Activated naive CD4-positive, alpha-beta T cell treated with anti-CD3 and anti-CD28 coated beads for 36 hours (primary cell): ENCODE measurements at regions of chr6 and their contacts with region 1.

Region 1: DNA sequence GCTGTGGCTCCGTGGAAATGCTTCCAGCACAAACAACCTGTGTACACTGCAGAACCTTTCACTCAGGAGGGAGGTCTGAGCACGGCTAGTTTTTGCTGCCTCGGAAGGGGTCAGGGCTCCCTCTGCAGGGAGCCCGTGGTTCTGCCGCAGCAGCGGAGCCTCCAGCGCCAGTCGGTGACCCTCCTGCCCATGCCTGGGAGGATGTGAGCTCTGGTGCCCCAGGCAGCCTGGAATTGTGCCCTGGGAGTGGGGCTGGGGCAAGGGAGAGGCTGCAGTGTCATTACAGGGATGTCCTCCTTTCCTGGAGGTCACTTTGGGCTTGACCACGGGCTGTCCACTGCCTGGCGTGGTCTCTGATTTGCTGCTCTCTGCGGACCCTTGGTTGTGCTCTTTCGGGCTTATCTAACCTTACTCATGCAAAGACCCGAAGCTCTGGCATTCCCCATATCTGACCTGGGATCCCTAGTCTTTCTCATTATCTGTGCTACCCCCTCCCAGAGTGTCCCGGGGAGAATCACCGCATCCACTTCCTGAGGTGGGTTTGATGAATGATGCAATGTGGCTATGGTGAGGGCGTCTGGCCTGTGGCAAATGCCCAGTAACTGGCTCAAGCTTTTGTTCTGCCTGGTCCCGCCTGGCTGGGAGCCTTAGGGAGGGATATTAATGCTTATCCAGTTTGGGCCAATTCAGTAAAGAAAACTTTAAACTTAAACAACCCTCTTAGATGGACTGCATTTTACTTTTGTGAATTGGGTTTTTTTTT is 59.6 kb upstream of the TAGAP start:
- DNase-seq: peak; percentile 86
- H3K4me3 Mint-ChIP-seq: no peak overlapping the region
- H3K27ac Mint-ChIP-seq: peak overlapping the region; percentile 86
- H3K4me1 Mint-ChIP-seq: peaks cover 81% of the 10 kb centered on the region
- H3K27me3 Mint-ChIP-seq: no peaks in the 10 kb centered on the region

Region 2: GRCh38 chr6:158559895-158560835 is 544.2 kb before region 1 on chr6 and contains the start of gene TMEM181:
- CTCF ChIA-PET with region 1: no interaction called
- intact Hi-C with region 1: no loop called
- DNase-seq: peak; percentile 90
- H3K4me3 Mint-ChIP-seq: peak within 1 kb of the TSS; percentile 93
- H3K27ac Mint-ChIP-seq: peak within 1 kb of the TSS; percentile 84
- H3K4me1 Mint-ChIP-seq: peaks cover 35% of the 10 kb centered on the region
- H3K27me3 Mint-ChIP-seq: no peaks in the 10 kb centered on the region
- total RNA-seq, gene TMEM181: 8.3 to 8.6 TPM

Region 3: DNA sequence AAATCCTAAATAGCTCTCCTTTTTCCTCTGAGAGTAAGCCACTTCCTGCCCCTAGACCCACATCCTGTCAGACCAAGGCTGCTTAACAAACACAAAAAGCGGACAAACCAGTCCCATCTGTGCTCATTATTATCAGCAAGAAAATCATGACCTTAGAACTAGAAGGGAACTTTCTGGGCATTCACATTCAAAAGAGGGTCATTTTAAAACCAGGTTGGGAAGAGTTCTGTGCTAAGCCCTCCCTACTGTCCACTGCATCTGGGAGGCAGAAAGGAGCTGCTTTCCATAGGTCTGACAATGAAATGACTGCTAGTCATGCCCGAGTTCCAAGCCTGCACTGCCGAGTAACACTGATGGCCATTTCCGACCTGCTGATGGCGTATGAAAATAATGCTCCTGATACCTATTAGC is 300.6 kb before region 1 on chr6:
- CTCF ChIA-PET with region 1: no interaction called
- intact Hi-C with region 1: loop called (anchors 5 kb)
- DNase-seq: peak; percentile 52
- H3K4me3 Mint-ChIP-seq: peak overlapping the region; percentile 3
- H3K27ac Mint-ChIP-seq: peak overlapping the region; percentile 25
- H3K4me1 Mint-ChIP-seq: peaks cover 90% of the 10 kb centered on the region
- H3K27me3 Mint-ChIP-seq: no peaks in the 10 kb centered on the region

Region 4: DNA sequence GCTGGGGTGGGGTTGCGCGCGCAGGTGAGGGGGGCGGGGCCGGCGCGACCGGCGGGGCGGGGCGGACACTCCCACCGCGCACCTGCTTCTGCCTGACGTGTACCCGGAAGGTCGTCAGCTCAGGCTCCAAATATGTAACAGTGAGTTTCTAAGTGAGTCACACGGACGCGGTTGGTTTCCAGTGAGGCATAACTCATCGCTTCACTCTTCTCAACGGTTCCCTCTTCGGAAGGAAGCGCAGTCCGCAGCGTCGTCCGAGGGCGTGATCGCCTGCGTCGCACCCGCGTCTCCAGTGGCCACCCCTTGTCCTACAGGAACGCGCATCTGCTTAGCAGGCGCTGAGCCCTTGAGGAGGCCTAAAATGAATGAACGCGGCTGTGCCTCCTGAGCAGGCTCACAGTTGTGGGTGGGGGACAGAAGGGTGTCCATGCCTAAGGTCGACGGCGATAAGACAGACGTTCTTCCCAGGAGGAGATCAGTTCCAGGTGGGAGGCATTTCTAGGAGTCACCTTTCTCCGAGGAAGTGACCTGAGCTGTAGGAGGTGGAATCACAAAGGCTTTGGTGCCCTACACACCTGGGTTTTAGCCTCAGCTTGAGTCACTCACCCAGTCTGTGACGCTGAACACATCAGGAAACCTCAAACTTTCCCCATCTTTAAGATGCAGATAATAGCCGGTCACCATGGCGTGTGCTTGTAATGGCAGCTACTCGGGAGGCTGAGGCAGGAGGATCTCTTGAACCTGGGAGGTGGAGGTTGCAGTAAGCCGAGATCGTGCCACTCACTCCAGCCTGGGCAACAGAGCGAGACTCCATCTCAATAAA is 234.3 kb before region 1 on chr6:
- CTCF ChIA-PET with region 1: no interaction called
- intact Hi-C with region 1: loop called (anchors 2 kb)
- DNase-seq: peak; percentile 96
- H3K4me3 Mint-ChIP-seq: peak overlapping the region; percentile 88
- H3K27ac Mint-ChIP-seq: peak overlapping the region; percentile 99
- H3K4me1 Mint-ChIP-seq: peaks cover 35% of the 10 kb centered on the region
- H3K27me3 Mint-ChIP-seq: no peaks in the 10 kb centered on the region

Region 5: GRCh38 chr6:159017757-159018559 is 86.4 kb before region 1 on chr6:
- CTCF ChIA-PET with region 1: interaction called, 25 read pairs
- intact Hi-C with region 1: no loop called
- DNase-seq: no peak
- H3K4me3 Mint-ChIP-seq: no peak overlapping the region
- H3K27ac Mint-ChIP-seq: peak overlapping the region; percentile 68
- H3K4me1 Mint-ChIP-seq: peaks cover 47% of the 10 kb centered on the region
- H3K27me3 Mint-ChIP-seq: no peaks in the 10 kb centered on the region

Region 6: DNA sequence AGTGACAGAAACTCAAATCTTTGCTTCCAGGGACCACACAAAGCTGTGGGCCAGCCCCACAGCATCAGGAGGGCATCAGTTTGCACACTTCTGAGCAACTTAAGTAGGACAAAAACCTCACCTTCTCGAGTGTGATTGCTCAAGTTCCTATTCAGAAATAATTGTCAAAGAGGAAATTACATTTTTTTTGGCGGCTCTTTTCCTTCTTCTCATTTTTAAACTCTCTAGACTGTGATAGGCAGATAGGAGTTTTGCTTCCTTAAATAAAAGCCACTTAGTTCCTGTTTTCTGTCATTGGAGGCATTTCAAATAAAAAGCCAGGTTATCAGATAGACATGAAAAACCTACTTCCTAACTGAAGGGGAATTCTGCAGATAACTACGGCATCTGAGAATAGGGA is 48.3 kb before region 1 on chr6:
- CTCF ChIA-PET with region 1: interaction called, 26 read pairs
- intact Hi-C with region 1: loop called (anchors 1 kb)
- DNase-seq: peak; percentile 41
- H3K4me3 Mint-ChIP-seq: peak overlapping the region; percentile 22
- H3K27ac Mint-ChIP-seq: peak overlapping the region; percentile 91
- H3K4me1 Mint-ChIP-seq: peaks cover 60% of the 10 kb centered on the region
- H3K27me3 Mint-ChIP-seq: no peaks in the 10 kb centered on the region